ENCODE measurements at regions of chr9 and their contacts with region 1.

Region 1: DNA sequence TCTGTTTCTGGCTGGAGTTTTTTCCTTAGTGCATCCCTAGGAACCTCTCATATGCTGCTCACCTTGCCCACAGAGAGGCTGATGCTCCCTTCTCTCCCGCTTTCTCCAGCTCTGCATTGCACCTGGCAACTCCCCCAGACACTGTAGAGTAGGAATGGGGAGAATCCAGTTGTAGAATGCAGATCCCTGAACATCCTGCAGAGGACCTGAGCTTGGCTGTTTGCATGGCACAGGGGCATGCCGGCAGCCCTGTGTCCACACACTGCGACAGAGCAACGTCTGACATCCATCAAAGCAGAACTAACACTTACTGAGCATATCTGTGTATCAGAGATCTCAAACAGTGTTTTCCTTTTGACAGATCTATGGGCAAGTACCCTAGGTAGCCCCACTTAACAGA is 19.9 kb downstream of the IDNK start:
- DNase-seq: no peak
- H3K4me3 ChIP-seq: no peak overlapping the region
- H3K27ac ChIP-seq: no peak overlapping the region
- H3K4me1 ChIP-seq: peaks cover 0 to 3% (median 0%) of the 10 kb centered on the region in 4 experiments; a peak in 2 of 7 replicates
- H3K27me3 ChIP-seq: no peaks in the 10 kb centered on the region
- CTCF ChIP-seq: peak in 2 of 3 experiments; percentile 5 to 14; a peak in 1 of 4 replicates
- EP300 ChIP-seq: no peak
- POLR2A ChIP-seq: no peak
- RAD21 ChIP-seq: no peak; a peak in 1 of 4 replicates

Region 2: DNA sequence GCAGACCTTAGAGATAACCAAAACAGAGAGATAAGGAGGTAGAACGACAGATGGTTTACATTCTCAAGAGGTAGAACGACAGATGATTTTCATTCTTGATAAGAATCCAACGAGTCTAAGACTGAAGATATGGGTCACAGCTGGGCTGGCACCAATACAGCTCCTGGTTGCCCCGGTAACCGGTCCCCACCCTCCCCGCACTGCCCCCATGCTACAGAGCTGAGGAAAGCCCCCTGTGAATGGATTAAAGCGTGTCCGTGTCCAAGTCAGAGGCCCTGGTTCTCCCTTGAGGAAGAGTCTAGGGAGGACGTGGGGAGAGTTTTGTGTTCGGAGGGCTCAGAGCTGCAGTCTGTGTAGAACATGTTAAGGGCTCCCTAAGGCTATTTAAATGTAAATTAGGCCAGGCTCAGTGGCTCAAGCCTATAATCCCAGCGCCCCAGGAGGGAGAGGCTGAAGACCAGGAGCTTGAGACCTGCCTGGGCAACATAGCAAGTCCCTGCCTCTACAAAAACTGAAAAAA is 11.8 kb before region 1 on chr9:
- CTCF ChIA-PET with region 1: interaction called, 75 read pairs
- POLR2A ChIA-PET with region 1: interaction called, 11 read pairs
- DNase-seq: peak in 1 of 2 experiments; percentile 76
- H3K4me3 ChIP-seq: peak overlapping the region in 1 of 4 experiments; percentile 44; a peak in 2 of 8 replicates
- H3K27ac ChIP-seq: no peak overlapping the region
- H3K4me1 ChIP-seq: peaks cover 0 to 11% (median 3%) of the 10 kb centered on the region in 4 experiments; a peak in 1 of 7 replicates
- H3K27me3 ChIP-seq: no peaks in the 10 kb centered on the region
- CTCF ChIP-seq: no peak
- EP300 ChIP-seq: no peak
- POLR2A ChIP-seq: no peak
- RAD21 ChIP-seq: no peak

Region 3: GRCh38 chr9:83675466-83675865 is 32.7 kb after region 1 on chr9:
- CTCF ChIA-PET with region 1: no interaction called
- POLR2A ChIA-PET with region 1: no interaction called
- DNase-seq: no peak
- H3K4me3 ChIP-seq: no peak overlapping the region
- H3K27ac ChIP-seq: no peak overlapping the region
- H3K4me1 ChIP-seq: peaks cover 0 to 1% (median 0%) of the 10 kb centered on the region in 4 experiments; a peak in 1 of 7 replicates
- H3K27me3 ChIP-seq: no peaks in the 10 kb centered on the region
- CTCF ChIP-seq: no peak
- EP300 ChIP-seq: no peak
- POLR2A ChIP-seq: no peak
- RAD21 ChIP-seq: no peak

Region 4: DNA sequence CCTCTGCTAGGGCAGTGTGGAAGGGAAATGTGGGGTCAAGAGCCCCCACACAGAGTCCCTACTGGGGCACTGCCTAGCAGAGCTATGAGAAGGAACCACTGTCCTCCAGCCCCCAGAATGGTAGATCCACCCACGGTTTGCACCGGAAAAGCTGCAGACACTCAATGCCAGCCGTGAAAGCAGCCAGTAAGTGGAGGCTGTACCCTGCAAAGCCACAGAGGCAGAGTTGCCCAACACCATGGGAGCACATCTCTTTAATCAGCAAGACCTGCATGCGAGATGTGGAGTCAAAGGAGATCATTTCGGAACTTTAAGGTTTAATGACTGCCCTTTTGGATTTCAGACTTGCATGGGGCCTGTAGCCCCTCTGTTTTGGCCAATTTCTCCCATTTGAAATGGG is 122.6 kb after region 1 on chr9:
- CTCF ChIA-PET with region 1: no interaction called
- POLR2A ChIA-PET with region 1: no interaction called
- DNase-seq: no peak
- H3K4me3 ChIP-seq: no peak overlapping the region
- H3K27ac ChIP-seq: no peak overlapping the region
- H3K4me1 ChIP-seq: no peaks in the 10 kb centered on the region
- H3K27me3 ChIP-seq: no peaks in the 10 kb centered on the region
- CTCF ChIP-seq: no peak
- EP300 ChIP-seq: no peak
- POLR2A ChIP-seq: no peak
- RAD21 ChIP-seq: no peak